ENCODE measurements at regions of chr18 and their contacts with region 1.

Region 1: GRCh38 chr18:72566290-72566689 is 22.1 kb upstream of the CBLN2 start:
- DNase-seq: no peak
- ATAC-seq: no peak
- H3K4me3 ChIP-seq: no peak overlapping the region
- H3K27ac ChIP-seq: no peak overlapping the region
- H3K4me1 ChIP-seq: no peaks in the 10 kb centered on the region
- H3K27me3 ChIP-seq: no peaks in the 10 kb centered on the region

Region 2: GRCh38 chr18:72223733-72224132 is 342.6 kb before region 1 on chr18:
- intact Hi-C with region 1: no loop called
- DNase-seq: no peak
- ATAC-seq: no peak
- H3K4me3 ChIP-seq: no peak overlapping the region
- H3K27ac ChIP-seq: no peak overlapping the region
- H3K4me1 ChIP-seq: no peaks in the 10 kb centered on the region
- H3K27me3 ChIP-seq: no peaks in the 10 kb centered on the region

Region 3: DNA sequence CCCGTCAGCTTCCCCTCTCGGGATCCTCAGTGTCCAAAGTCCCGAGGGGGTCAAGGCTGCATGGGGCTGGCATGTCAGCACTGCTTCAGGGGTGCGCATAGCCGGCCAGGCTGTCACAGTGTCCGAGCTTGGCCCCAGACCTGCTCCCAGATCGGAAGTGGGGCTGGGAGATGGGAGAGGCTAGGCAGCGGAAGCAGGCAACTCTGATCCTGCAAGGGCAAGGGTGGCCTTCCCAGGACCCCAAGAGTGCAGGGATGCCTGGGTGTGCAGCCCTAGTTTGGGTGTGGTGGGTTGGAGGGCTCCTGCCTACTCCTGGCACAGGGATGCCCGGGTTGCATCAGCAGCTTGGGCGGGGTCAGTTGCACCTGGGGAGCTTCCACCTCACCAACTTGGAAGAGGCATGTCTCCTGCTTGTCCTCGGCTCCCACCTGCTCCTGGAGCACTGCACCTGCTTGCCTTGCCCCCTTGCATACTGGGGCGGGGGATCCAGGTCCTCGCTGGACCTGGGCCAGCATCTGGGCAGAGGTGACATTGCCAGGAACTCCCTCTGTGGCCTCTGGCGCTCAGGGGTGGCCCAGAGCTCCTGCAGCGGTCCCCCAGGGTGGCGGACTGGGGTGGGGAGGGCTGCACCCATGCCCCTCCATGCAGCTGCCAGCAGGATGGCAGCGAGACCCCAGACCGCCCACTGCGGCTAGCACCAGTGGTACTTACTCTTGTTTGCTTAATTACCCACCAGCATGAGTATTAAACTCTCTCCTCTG is 63.4 kb before region 1 on chr18:
- intact Hi-C with region 1: loop called in 1 of 4 experiments (anchors 10 kb)
- DNase-seq: peak in 2 of 3 donors; percentile 26 to 37
- ATAC-seq: peak in 1 of 2 donors; percentile 24
- H3K4me3 ChIP-seq: no peak overlapping the region
- H3K27ac ChIP-seq: no peak overlapping the region
- H3K4me1 ChIP-seq: no peaks in the 10 kb centered on the region
- H3K27me3 ChIP-seq: no peaks in the 10 kb centered on the region

Measured in right cardiac atrium (tissue), 5 donors.